MCF 10A (cell line): ENCODE measurements at regions of chr1 and their contacts with region 1.

Region 1: DNA sequence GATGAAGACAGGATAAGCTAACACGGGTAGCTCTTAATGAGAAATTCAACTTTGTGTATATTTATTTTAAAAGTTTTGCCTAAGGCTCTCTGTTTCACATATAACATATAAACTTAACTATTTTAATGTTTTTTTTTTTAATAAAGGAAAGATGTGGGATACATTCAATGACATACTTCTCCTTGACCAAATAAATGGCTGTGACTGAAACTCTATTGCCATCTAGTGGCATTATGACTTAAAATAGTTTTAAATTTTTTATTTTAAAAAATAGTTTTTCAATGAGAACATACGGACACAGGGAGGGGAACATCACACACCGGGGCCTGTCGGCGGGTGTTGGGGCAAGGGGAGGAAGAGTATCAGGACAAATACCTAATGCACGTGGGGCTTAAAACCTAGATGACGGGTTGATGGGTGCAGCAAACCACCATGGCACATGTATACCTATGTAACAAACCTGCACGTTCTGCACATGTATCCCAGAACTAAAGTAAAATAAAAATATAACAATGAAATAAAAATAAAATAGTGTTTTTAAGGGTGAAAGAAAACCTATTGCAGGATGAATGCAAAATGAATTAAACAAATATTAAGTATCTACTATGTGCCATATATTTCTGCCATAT is 83.4 kb downstream of the LYST start:
- DNase-seq: peak; percentile 73
- H3K4me3 Mint-ChIP-seq: no peak overlapping the region
- H3K27ac Mint-ChIP-seq: no peak overlapping the region
- H3K4me1 Mint-ChIP-seq: peaks cover 10% of the 10 kb centered on the region
- H3K27me3 Mint-ChIP-seq: no peaks in the 10 kb centered on the region
- CTCF ChIP-seq: peak; percentile 72

Region 2: DNA sequence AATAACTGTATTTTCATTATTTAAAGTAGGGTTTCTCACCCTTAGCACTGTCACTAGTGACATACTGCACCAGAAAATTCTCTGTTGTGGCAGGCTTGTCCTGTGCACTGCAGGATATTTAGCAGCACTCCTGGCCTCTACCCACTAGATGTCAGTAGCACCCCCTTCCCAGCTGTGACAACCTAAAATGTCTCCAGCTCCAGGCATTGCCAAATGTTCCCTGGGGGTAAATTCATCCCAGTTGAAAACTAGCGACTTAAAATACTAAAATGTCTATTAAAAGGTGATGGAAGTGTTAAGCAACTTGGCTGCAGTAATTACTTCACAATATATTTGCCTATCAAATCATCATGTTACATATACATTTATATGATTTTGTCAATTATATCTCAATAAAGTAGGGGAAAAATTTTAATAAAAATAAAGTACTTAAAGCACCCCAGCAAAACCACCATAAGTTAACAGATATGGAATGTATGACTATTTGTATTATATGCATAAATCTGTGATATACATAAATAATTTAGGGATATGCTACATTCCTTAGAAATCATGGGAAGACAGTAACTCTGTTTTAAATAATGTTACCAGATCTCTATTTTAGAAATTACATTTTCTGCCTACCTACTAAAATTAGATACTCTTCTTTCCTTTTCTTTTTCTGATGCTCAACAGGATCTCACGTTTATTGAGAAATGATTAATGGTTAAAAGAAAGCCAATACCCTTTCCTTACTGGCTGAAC is 529.9 kb before region 1 on chr1:
- CTCF ChIA-PET with region 1: no interaction called
- POLR2A ChIA-PET with region 1: no interaction called
- intact Hi-C with region 1: loop called (anchors 1 kb)
- DNase-seq: peak; percentile 95
- H3K4me3 Mint-ChIP-seq: no peak overlapping the region
- H3K27ac Mint-ChIP-seq: peak overlapping the region; percentile 49
- H3K4me1 Mint-ChIP-seq: peaks cover 10% of the 10 kb centered on the region
- H3K27me3 Mint-ChIP-seq: no peaks in the 10 kb centered on the region
- CTCF ChIP-seq: peak; percentile 98

Region 3: DNA sequence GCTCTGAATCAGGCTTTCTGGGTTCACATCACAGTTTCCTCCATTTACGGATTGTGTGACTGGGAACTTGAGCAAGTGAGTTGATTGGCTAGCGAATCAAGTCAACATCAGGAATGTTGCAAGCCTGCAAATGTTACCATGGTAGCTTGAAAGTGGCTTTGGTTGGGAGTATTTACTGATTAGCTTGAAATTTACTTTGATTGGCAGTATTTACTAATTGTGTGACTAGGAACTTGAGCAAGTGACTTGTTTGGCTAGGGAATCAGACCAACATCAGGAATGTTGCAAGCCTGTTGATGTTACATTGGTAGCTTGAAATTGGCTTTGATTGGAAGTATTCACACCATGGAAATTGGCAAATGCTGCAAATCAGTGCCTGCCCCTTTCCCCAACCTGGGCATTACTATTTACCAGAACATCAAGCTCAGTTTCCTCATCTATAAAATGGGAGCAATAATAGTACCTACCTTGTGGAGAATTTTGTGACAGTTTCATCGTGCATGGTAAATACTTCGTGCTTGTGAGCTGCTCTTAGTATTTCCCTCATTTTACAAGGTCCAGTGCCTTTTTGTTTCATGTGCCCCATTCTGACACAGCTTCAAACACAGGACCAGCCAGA is 256.0 kb before region 1 on chr1:
- CTCF ChIA-PET with region 1: interaction called, 11 read pairs
- POLR2A ChIA-PET with region 1: no interaction called
- intact Hi-C with region 1: no loop called
- DNase-seq: no peak
- H3K4me3 Mint-ChIP-seq: no peak overlapping the region
- H3K27ac Mint-ChIP-seq: no peak overlapping the region
- H3K4me1 Mint-ChIP-seq: peaks cover 11% of the 10 kb centered on the region
- H3K27me3 Mint-ChIP-seq: no peaks in the 10 kb centered on the region
- CTCF ChIP-seq: no peak

Region 4: GRCh38 chr1:235758931-235759330 is 24.3 kb before region 1 on chr1:
- CTCF ChIA-PET with region 1: interaction called, 39 read pairs
- POLR2A ChIA-PET with region 1: no interaction called
- intact Hi-C with region 1: no loop called
- DNase-seq: peak; percentile 100
- H3K4me3 Mint-ChIP-seq: no peak overlapping the region
- H3K27ac Mint-ChIP-seq: no peak overlapping the region
- H3K4me1 Mint-ChIP-seq: peaks cover 12% of the 10 kb centered on the region
- H3K27me3 Mint-ChIP-seq: no peaks in the 10 kb centered on the region
- CTCF ChIP-seq: no peak

Region 5: DNA sequence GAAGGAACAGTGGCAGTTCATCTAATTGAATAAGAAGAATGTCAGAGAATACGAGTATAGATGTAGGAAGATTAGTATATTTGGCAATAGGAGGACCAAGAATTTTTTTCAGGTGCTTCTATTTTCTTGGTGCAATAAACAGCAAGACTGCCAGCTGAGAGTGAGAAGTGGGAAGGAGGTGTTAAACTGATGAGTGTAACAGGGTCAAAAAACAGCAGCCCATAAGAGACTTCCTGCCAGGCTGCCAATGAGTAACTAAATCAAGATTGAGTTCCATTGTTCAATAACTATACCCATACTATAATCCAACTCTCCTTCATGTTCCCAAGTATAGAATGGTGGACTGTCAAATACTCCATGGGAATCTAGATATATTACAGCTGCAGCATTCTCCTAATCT is 54.8 kb after region 1 on chr1:
- CTCF ChIA-PET with region 1: interaction called, 54 read pairs
- POLR2A ChIA-PET with region 1: no interaction called
- intact Hi-C with region 1: loop called (anchors 1 kb)
- DNase-seq: no peak
- H3K4me3 Mint-ChIP-seq: no peak overlapping the region
- H3K27ac Mint-ChIP-seq: no peak overlapping the region
- H3K4me1 Mint-ChIP-seq: no peaks in the 10 kb centered on the region
- H3K27me3 Mint-ChIP-seq: no peaks in the 10 kb centered on the region
- CTCF ChIP-seq: no peak

Region 6: DNA sequence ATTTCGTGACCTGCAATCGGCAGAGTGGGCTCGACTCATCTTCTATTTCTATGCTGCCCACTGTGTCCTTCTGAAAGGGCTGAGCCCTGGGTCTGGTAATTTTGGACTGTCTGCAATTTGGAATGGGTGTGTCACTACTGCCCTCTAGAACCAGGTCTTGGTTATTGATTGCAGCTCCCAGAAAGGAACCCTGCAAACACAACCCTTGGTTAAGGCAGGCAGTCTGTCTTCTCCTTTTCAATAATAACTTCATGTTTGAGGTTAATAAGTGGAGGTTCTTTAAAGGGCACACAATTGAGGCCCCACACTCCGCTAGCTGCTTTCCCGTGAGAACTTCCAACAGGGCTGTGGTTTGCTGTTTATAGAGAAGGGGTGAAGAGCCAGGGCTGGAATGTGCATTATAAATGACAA is 163.3 kb after region 1 on chr1:
- CTCF ChIA-PET with region 1: interaction called, 7 read pairs
- POLR2A ChIA-PET with region 1: no interaction called
- intact Hi-C with region 1: loop called (anchors 1 kb)
- DNase-seq: peak; percentile 77
- H3K4me3 Mint-ChIP-seq: no peak overlapping the region
- H3K27ac Mint-ChIP-seq: no peak overlapping the region
- H3K4me1 Mint-ChIP-seq: peaks cover 47% of the 10 kb centered on the region
- H3K27me3 Mint-ChIP-seq: no peaks in the 10 kb centered on the region
- CTCF ChIP-seq: peak; percentile 75